ENCODE measurements at regions of chr1 and their contacts with region 1.

Region 1: GRCh38 chr1:24744911-24745710 is at the start of gene CLIC4:
- DNase-seq: peak; percentile 100
- H3K4me3 Mint-ChIP-seq: peak within 1 kb of the TSS; percentile 80
- H3K27ac Mint-ChIP-seq: peak within 1 kb of the TSS; percentile 72
- H3K4me1 Mint-ChIP-seq: peaks cover 35% of the 10 kb centered on the region
- H3K27me3 Mint-ChIP-seq: peaks cover 61% of the 10 kb centered on the region

Region 2: GRCh38 chr1:24688621-24689195 is 56.4 kb before region 1 on chr1:
- CTCF ChIA-PET with region 1: interaction called, 13 read pairs
- DNase-seq: peak; percentile 66
- H3K4me3 Mint-ChIP-seq: no peak overlapping the region
- H3K27ac Mint-ChIP-seq: no peak overlapping the region
- H3K4me1 Mint-ChIP-seq: no peaks in the 10 kb centered on the region
- H3K27me3 Mint-ChIP-seq: peaks cover 20% of the 10 kb centered on the region

Region 3: GRCh38 chr1:24805534-24806301 is 60.6 kb after region 1 on chr1:
- CTCF ChIA-PET with region 1: no interaction called
- DNase-seq: no peak
- H3K4me3 Mint-ChIP-seq: no peak overlapping the region
- H3K27ac Mint-ChIP-seq: no peak overlapping the region
- H3K4me1 Mint-ChIP-seq: no peaks in the 10 kb centered on the region
- H3K27me3 Mint-ChIP-seq: no peaks in the 10 kb centered on the region